CD4-positive, alpha-beta T cell (primary cell): ENCODE measurements at regions of chr5 and their contacts with region 1.

Region 1: GRCh38 chr5:134586866-134587524 is 45.6 kb downstream of the SAR1B start:
- DNase-seq: peak; percentile 72 to 88 (median 79)
- ATAC-seq: peak; percentile 97
- H3K4me3 ChIP-seq: no peak overlapping the region
- H3K4me3 Mint-ChIP-seq: peak overlapping the region; percentile 3
- H3K27ac ChIP-seq: no peak overlapping the region
- H3K27ac Mint-ChIP-seq: peak overlapping the region; percentile 28
- H3K4me1 ChIP-seq: peaks cover 7% of the 10 kb centered on the region
- H3K4me1 Mint-ChIP-seq: peaks cover 16% of the 10 kb centered on the region
- H3K27me3 ChIP-seq: no peaks in the 10 kb centered on the region
- H3K27me3 Mint-ChIP-seq: no peaks in the 10 kb centered on the region
- CTCF ChIP-seq: peak; percentile 84

Region 2: GRCh38 chr5:133425222-133425621 is 1161.8 kb before region 1 on chr5:
- CTCF ChIA-PET with region 1: no interaction called
- POLR2A ChIA-PET with region 1: no interaction called
- intact Hi-C with region 1: no loop called
- DNase-seq: peak in 1 of 14 experiments; percentile 1
- ATAC-seq: no peak
- H3K4me3 ChIP-seq: no peak overlapping the region
- H3K4me3 Mint-ChIP-seq: no peak overlapping the region
- H3K27ac ChIP-seq: no peak overlapping the region
- H3K27ac Mint-ChIP-seq: no peak overlapping the region
- H3K4me1 ChIP-seq: peaks cover 11% of the 10 kb centered on the region
- H3K4me1 Mint-ChIP-seq: peaks cover 9% of the 10 kb centered on the region
- H3K27me3 ChIP-seq: peaks cover 3% of the 10 kb centered on the region in 2 experiments
- H3K27me3 Mint-ChIP-seq: no peaks in the 10 kb centered on the region
- CTCF ChIP-seq: no peak

Region 3: GRCh38 chr5:134184155-134185135 is 402.6 kb before region 1 on chr5:
- CTCF ChIA-PET with region 1: no interaction called
- POLR2A ChIA-PET with region 1: no interaction called
- intact Hi-C with region 1: loop called (anchors 5 kb)
- DNase-seq: peak; percentile 65 to 87 (median 71)
- ATAC-seq: peak; percentile 98
- H3K4me3 ChIP-seq: no peak overlapping the region
- H3K4me3 Mint-ChIP-seq: no peak overlapping the region
- H3K27ac ChIP-seq: no peak overlapping the region
- H3K27ac Mint-ChIP-seq: no peak overlapping the region
- H3K4me1 ChIP-seq: peaks cover 6% of the 10 kb centered on the region
- H3K4me1 Mint-ChIP-seq: no peaks in the 10 kb centered on the region
- H3K27me3 ChIP-seq: no peaks in the 10 kb centered on the region
- H3K27me3 Mint-ChIP-seq: no peaks in the 10 kb centered on the region
- CTCF ChIP-seq: peak; percentile 91

Region 4: GRCh38 chr5:134813407-134813806 is 226.4 kb after region 1 on chr5:
- CTCF ChIA-PET with region 1: no interaction called
- POLR2A ChIA-PET with region 1: no interaction called
- intact Hi-C with region 1: no loop called
- DNase-seq: peak in 3 of 14 experiments; percentile 2 to 45 (median 30)
- ATAC-seq: peak; percentile 21
- H3K4me3 ChIP-seq: no peak overlapping the region
- H3K4me3 Mint-ChIP-seq: no peak overlapping the region
- H3K27ac ChIP-seq: no peak overlapping the region
- H3K27ac Mint-ChIP-seq: peak overlapping the region; percentile 24
- H3K4me1 ChIP-seq: peaks cover 7% of the 10 kb centered on the region
- H3K4me1 Mint-ChIP-seq: no peaks in the 10 kb centered on the region
- H3K27me3 ChIP-seq: no peaks in the 10 kb centered on the region
- H3K27me3 Mint-ChIP-seq: no peaks in the 10 kb centered on the region
- CTCF ChIP-seq: no peak